ENCODE measurements at regions of chr15 and their contacts with region 1.

Region 1: DNA sequence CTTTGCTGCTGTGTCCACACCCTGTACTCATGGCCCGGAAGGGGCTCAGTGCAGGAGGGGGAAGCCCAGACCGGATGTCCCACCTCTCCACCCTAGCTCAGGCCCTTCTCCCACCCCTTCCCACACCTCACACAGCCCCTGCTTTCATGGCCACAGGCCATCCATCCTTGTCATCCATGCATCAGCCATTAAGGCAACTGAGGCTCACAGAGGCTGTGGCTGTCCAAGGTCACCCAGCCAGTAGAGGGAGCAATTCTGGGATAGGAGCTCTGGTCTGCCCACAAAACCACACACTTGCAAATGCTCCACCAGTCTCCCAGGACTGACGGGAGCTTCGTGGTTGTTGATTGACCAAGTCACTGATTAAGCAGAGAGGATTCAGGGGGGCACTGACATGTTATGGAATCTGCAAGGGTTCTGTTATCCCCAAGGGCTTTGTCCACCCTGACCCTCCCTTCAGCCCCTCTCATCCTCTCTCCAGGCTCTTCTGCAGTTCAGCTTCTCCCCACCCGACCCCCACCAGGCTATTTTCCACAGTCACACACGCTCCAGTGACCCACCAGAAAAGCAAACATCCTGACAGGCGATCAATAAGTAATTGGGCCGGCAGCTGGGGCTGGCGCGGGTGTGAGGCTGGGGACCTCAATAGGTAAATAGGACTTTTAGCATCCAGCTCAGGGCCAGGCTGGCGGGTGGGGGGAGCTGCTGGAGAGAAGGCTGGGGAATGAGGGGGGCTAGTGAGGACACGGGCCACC is 15.1 kb downstream of the LINGO1 start:
- DNase-seq: no peak
- H3K27ac ChIP-seq: no peak overlapping the region
- CTCF ChIP-seq: 0 out of 2 replicates have a peak, but pooled peaks have one; percentile 17

Region 2: GRCh38 chr15:76711351-76711827 is 906.3 kb before region 1 on chr15:
- CTCF ChIA-PET with region 1: no interaction called
- POLR2A ChIA-PET with region 1: no interaction called
- DNase-seq: no peak
- H3K27ac ChIP-seq: no peak overlapping the region
- CTCF ChIP-seq: no peak

Region 3: GRCh38 chr15:77633134-77633912 is 15.7 kb after region 1 on chr15:
- CTCF ChIA-PET with region 1: interaction called, 19 read pairs
- POLR2A ChIA-PET with region 1: no interaction called
- DNase-seq: peak; percentile 90
- H3K27ac ChIP-seq: no peak overlapping the region
- CTCF ChIP-seq: peak; percentile 100

Region 4: DNA sequence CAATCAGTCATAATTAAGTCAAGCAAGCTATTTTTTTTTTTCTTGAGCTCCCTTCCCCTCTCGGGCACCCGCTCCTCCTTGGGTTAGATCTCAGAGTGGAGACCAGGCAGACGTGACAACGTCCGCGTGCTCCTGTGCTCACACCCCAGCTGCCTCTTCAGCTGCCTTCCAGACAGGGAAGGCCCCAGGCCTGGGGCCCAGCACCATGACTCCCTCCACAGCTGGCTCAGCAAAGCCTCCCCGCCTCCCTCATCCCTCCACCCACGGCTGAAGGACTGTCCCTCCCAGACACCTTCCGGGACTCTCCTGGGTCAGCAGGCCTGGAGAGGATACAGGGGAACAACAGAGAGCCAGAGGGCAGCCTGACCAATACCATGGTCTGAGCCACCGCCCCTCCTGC is 103.0 kb after region 1 on chr15:
- CTCF ChIA-PET with region 1: no interaction called
- POLR2A ChIA-PET with region 1: no interaction called
- DNase-seq: no peak
- H3K27ac ChIP-seq: no peak overlapping the region
- CTCF ChIP-seq: no peak

Measured in RWPE1 (cell line).